HAP-1 (cell line): ENCODE measurements at regions of chr1 and their contacts with region 1.

Region 1: GRCh38 chr1:7186382-7187109 is 401.3 kb downstream of the CAMTA1 start:
- DNase-seq: no peak
- H3K4me3 ChIP-seq: no peak overlapping the region
- H3K4me1 ChIP-seq: no peaks in the 10 kb centered on the region
- H3K27me3 ChIP-seq: no peaks in the 10 kb centered on the region; the same call in 1 of the 2 replicates

Region 2: GRCh38 chr1:7120863-7121621 is 65.5 kb before region 1 on chr1:
- in situ Hi-C with region 1: loop called (anchors 10 kb)
- DNase-seq: no peak
- H3K4me3 ChIP-seq: no peak overlapping the region
- H3K4me1 ChIP-seq: 0 out of 2 replicates have a peak, but pooled peaks cover 3% of the 10 kb centered on the region
- H3K27me3 ChIP-seq: no peaks in the 10 kb centered on the region

Region 3: GRCh38 chr1:7150724-7151280 is 35.7 kb before region 1 on chr1:
- in situ Hi-C with region 1: no loop called
- DNase-seq: no peak
- H3K4me3 ChIP-seq: no peak overlapping the region
- H3K4me1 ChIP-seq: no peaks in the 10 kb centered on the region
- H3K27me3 ChIP-seq: peaks cover 3% of the 10 kb centered on the region; the same call in 1 of the 2 replicates

Region 4: DNA sequence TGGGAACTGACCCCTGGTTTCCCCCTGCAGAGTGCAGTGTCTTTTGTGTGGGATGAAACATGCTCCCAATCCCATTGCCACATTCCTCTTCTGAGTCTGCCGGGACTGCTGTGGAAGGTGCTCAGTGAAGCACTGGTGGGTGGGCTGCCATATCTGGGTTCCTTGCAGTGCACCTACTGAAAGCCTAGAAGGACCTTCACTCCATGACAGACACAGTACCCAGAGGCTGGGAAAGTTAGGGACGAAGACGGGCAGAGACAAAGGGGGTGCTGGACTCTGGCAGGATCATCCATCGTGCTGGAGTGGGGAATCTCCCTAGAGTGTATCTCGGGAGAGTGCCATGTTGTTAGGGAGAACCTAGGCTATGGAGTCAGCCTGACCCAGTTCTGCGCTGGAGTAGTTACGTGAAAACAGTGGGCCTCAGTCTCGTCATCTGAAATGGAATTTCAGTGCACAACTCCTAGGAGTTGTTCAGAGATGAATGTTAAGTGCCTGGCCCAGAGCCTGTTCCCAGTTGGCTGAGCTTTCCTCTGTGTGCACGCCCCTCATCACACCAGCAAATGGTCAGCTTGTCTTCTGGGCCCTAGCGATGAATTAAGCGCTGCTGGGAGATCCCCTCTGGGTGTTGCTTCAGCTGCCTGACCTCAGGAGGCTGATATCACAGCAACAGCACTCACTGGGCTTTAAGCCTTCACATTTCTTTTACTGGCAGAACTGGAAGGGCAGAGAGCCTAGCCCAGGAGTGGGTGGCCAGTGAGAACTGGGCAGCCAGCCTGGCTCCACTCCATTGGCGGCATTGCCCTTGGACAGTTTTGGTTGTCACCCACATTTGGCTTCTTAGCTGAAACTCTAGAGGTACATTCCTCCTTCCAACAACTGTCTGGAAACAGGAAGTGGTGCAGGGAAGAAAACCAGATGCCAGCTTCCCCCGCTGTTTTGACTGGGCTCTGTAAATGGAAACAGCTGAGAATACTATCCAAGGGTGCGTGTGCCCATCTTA is 104.7 kb after region 1 on chr1:
- in situ Hi-C with region 1: no loop called
- DNase-seq: no peak
- H3K4me3 ChIP-seq: no peak overlapping the region
- H3K4me1 ChIP-seq: no peaks in the 10 kb centered on the region
- H3K27me3 ChIP-seq: no peaks in the 10 kb centered on the region